Activated B cell treated with CpG ODN at 0.5 μM for 24 hours (primary cell): ENCODE measurements at regions of chr1 and their contacts with region 1.

Region 1: DNA sequence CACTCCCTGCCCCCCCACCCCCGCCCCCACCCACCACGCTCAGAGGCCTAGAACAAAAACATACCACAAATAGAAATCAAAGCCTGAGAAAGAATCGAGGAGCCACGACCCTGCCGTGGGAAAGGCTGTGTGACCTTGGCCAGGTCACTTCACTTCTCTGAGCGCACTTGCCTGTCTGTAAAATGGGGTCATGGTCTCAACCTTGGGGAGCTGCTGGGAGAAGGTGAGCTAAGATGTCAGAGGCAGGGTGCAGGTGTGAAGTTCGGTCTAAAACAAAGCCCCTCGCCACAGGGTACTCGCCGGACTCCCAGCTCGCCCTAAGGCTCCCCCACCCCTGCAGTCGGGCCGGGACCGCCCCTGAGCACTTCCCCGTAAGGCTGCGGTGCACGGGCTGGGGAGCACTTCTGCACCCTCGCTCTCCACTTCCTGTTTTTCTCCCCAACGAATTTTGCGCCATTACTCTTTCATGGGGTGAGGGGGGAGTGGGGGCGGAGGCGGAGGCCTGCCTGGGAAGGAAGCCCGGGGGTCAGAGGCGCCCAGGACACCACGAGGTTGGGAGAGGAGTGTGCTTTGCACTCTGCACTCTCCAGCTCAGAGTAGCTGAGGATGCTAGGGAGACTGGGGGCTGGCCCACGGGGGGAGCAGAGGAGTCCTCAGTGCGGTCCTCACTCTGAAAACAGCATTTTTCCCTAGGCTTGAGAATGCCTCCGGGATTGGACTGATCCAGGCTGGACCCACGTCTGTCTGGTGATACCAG is 21.9 kb upstream of the PIK3CD start:
- DNase-seq: peak; percentile 70
- ATAC-seq: peak; percentile 43
- H3K4me3 Mint-ChIP-seq: peak overlapping the region; percentile 88
- H3K27ac Mint-ChIP-seq: peak overlapping the region; percentile 87
- H3K4me1 Mint-ChIP-seq: peaks cover 77% of the 10 kb centered on the region
- H3K27me3 Mint-ChIP-seq: no peaks in the 10 kb centered on the region
- CTCF ChIP-seq: no peak

Region 2: GRCh38 chr1:8878448-8879347 is 750.9 kb before region 1 on chr1 and contains the start of gene ENO1:
- CTCF ChIA-PET with region 1: no interaction called
- POLR2A ChIA-PET with region 1: interaction called, 3 read pairs
- intact Hi-C with region 1: loop called (anchors 5 kb)
- DNase-seq: peak; percentile 100
- ATAC-seq: peak; percentile 79
- H3K4me3 Mint-ChIP-seq: peak within 1 kb of the TSS; percentile 95
- H3K27ac Mint-ChIP-seq: peak within 1 kb of the TSS; percentile 96
- H3K4me1 Mint-ChIP-seq: peaks cover 45% of the 10 kb centered on the region
- H3K27me3 Mint-ChIP-seq: no peaks in the 10 kb centered on the region
- CTCF ChIP-seq: no peak
- total RNA-seq, gene ENO1: 837 and 886 TPM in 2 replicates

Region 3: GRCh38 chr1:9615316-9616063 is 14.1 kb before region 1 on chr1:
- CTCF ChIA-PET with region 1: interaction called, 41 read pairs
- POLR2A ChIA-PET with region 1: interaction called, 23 read pairs
- intact Hi-C with region 1: no loop called
- DNase-seq: peak; percentile 47
- ATAC-seq: peak; percentile 96
- H3K4me3 Mint-ChIP-seq: no peak overlapping the region
- H3K27ac Mint-ChIP-seq: no peak overlapping the region
- H3K4me1 Mint-ChIP-seq: peaks cover 4% of the 10 kb centered on the region
- H3K27me3 Mint-ChIP-seq: no peaks in the 10 kb centered on the region
- CTCF ChIP-seq: peak; percentile 43

Region 4: GRCh38 chr1:9659328-9659998 is 29.8 kb after region 1 on chr1:
- CTCF ChIA-PET with region 1: interaction called, 125 read pairs
- POLR2A ChIA-PET with region 1: interaction called, 699 read pairs
- intact Hi-C with region 1: loop called (anchors 1 kb)
- DNase-seq: no peak
- ATAC-seq: no peak
- H3K4me3 Mint-ChIP-seq: peak overlapping the region; percentile 19
- H3K27ac Mint-ChIP-seq: peak overlapping the region; percentile 69
- H3K4me1 Mint-ChIP-seq: peaks cover 83% of the 10 kb centered on the region
- H3K27me3 Mint-ChIP-seq: no peaks in the 10 kb centered on the region
- CTCF ChIP-seq: no peak

Region 5: DNA sequence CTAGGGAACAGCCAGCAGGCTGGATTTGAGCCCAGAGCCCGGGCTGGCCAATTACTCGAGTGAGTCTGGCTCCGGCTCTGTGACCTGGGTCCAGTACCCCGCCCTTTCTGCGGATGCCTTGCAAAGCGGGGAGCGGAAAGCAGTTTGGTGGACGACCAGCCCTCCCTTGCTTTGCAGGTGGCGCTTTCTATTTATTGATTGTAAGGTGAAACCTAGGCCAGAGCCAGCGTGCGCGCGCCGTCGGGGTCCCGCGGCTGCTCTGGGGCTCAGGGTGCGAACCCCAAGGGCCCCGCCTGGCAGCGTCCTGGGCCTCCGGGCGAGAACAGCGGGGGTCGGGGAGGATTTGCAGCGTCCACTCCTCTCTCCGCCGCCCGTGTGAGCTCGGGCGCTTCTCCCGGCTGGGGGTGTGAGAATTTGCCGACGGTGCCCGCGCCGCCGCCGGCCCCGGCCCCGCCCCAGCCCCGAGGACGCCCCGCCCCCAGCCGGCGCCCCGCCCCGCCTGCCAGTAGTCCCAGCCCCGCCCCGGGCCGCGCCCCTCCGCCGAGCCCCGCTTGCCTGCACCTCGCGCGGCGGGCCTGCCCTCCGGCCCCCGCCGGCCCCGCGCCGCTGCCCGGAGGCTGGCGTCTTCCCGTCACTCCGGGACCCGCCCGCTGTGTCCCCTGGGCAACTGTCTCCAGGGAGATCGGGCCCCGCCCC is 59.5 kb after region 1 on chr1:
- CTCF ChIA-PET with region 1: interaction called, 33 read pairs
- POLR2A ChIA-PET with region 1: interaction called, 100 read pairs
- intact Hi-C with region 1: loop called (anchors 1 kb)
- DNase-seq: peak; percentile 80
- ATAC-seq: peak; percentile 78
- H3K4me3 Mint-ChIP-seq: peak overlapping the region; percentile 82
- H3K27ac Mint-ChIP-seq: peak overlapping the region; percentile 87
- H3K4me1 Mint-ChIP-seq: peaks cover 68% of the 10 kb centered on the region
- H3K27me3 Mint-ChIP-seq: no peaks in the 10 kb centered on the region
- CTCF ChIP-seq: no peak

Region 6: DNA sequence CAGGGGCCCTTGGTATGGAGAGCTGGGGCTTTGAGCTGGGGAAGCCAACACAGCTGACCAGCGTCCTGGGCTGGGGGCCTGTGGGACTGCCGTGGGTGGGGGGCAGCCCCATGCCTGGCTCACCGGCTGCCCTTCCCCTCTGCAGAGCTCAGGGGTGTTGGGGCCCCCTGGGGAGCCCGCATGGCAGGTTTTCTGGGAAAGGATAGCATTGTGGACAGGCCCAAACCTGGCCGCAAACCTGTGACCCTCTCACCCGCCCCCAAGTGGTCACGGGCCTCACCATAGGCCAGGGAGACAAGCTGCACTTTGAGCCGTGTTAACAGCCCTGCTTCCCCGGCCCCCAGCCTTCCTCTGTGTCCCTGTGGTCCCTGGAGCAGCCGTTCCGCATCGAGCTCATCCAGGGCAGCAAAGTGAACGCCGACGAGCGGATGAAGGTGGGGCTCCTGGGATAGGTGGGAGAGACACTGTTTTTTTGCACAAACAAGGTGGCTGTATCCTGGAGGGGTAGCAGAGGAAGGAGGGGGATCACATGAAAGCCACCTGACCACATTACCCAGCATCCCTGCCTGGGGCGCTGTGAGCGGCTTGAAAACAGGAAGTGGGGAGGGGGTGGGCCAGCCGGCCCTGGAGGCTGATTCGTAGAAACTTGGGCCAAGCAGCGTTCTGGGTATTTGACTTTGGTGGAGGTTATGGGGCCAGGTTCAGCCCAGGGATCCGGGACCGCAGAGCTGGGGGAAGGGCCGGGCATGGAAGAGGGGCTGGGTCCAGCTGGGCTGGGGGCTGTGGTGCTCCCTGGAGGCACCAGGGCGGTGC is 87.8 kb after region 1 on chr1:
- CTCF ChIA-PET with region 1: interaction called, 24 read pairs
- POLR2A ChIA-PET with region 1: interaction called, 32 read pairs
- intact Hi-C with region 1: loop called (anchors 1 kb)
- DNase-seq: peak; percentile 68
- ATAC-seq: peak; percentile 79
- H3K4me3 Mint-ChIP-seq: peak overlapping the region; percentile 74
- H3K27ac Mint-ChIP-seq: peak overlapping the region; percentile 92
- H3K4me1 Mint-ChIP-seq: peaks cover 50% of the 10 kb centered on the region
- H3K27me3 Mint-ChIP-seq: no peaks in the 10 kb centered on the region
- CTCF ChIP-seq: no peak

Region 7: DNA sequence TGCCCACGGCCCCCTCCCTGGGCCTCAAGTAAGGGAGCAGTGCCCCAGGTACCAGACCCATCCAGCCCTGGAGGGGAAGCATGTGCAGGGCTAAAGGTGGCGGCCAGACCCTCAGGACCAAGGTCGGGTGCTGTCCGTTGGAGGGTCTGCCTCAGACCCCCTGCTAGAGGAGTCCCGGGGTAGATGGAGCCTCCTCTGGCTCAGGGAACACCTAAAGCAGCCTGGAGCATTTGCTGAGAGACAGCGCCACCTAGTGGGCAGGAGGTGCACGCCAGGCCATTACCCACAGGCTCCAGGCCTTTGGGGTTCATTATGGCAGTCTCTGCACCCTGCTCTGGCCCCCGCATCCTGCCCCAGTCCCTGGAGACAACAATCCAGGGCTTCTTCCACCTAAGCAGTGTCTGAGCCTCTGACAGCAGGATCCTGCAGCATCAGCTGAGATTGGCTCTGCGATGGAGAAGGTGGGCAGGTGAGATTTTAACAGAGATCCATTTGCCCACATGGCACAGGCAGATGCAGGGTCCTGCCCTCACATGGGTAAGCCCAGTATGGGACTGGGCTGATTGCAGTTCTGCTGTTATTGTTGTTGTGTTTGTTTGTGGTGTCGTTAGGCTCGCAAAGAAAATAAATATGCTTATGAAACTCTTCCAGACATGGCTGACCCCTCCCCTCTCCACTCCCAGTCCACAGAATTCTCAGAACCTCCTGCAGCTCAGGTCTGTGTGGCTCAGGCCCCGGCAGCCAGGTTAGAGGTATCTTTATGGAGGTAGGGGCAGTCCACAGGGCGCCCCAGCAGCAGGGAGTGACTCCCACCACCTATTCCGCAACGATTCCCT is 238.0 kb after region 1 on chr1:
- CTCF ChIA-PET with region 1: interaction called, 6 read pairs
- POLR2A ChIA-PET with region 1: interaction called, 3 read pairs
- intact Hi-C with region 1: loop called (anchors 1 kb)
- DNase-seq: peak; percentile 79
- ATAC-seq: peak; percentile 97
- H3K4me3 Mint-ChIP-seq: no peak overlapping the region
- H3K27ac Mint-ChIP-seq: no peak overlapping the region
- H3K4me1 Mint-ChIP-seq: no peaks in the 10 kb centered on the region
- H3K27me3 Mint-ChIP-seq: no peaks in the 10 kb centered on the region
- CTCF ChIP-seq: peak; percentile 24